HCT116 (cell line): ENCODE measurements at regions of chr2 and their contacts with region 1.

Region 1: GRCh38 chr2:189142893-189143759 is 36.4 kb downstream of the COL5A2 start:
- DNase-seq: peak; percentile 62
- ATAC-seq: peak; percentile 99
- H3K4me3 ChIP-seq: no peak overlapping the region
- H3K27ac ChIP-seq: no peak overlapping the region
- H3K4me1 ChIP-seq: no peaks in the 10 kb centered on the region
- H3K27me3 ChIP-seq: no peaks in the 10 kb centered on the region
- CTCF ChIP-seq: peak; percentile 96 to 99 (median 99)
- POLR2A ChIP-seq: no peak
- RAD21 ChIP-seq: peak; percentile 71

Region 2: GRCh38 chr2:188949046-188949818 is 193.9 kb before region 1 on chr2:
- CTCF ChIA-PET with region 1: no interaction called
- POLR2A ChIA-PET with region 1: no interaction called
- RAD21 ChIA-PET with region 1: no interaction called
- intact Hi-C with region 1: no loop called
- DNase-seq: no peak
- ATAC-seq: no peak
- H3K4me3 ChIP-seq: no peak overlapping the region
- H3K27ac ChIP-seq: no peak overlapping the region
- H3K4me1 ChIP-seq: no peaks in the 10 kb centered on the region
- H3K27me3 ChIP-seq: no peaks in the 10 kb centered on the region
- CTCF ChIP-seq: no peak
- POLR2A ChIP-seq: no peak
- RAD21 ChIP-seq: no peak

Region 3: DNA sequence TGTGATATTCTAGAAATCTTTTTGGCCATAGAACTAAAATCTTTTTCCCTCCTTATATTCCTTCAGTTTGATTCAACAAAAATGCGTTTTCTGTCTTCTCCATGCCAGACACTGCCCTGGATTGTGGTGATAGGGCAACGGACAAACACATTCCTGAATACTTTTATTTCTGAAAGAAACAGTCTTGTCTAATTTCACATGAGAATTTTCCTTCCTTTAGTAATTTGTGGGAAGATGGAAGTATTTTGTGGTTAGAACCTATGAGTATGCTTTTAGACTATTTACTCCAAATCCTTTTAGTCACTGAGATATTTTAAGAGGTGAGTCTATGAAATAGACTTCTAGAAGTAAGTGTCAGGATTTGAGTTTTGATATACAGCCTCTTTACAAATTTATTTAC is 13.2 kb before region 1 on chr2:
- CTCF ChIA-PET with region 1: interaction called, 27 read pairs
- POLR2A ChIA-PET with region 1: no interaction called
- RAD21 ChIA-PET with region 1: no interaction called
- intact Hi-C with region 1: no loop called
- DNase-seq: no peak
- ATAC-seq: no peak
- H3K4me3 ChIP-seq: no peak overlapping the region
- H3K27ac ChIP-seq: no peak overlapping the region
- H3K4me1 ChIP-seq: no peaks in the 10 kb centered on the region
- H3K27me3 ChIP-seq: no peaks in the 10 kb centered on the region
- CTCF ChIP-seq: no peak
- POLR2A ChIP-seq: no peak
- RAD21 ChIP-seq: no peak

Region 4: GRCh38 chr2:189164746-189165145 is 21.6 kb after region 1 on chr2:
- CTCF ChIA-PET with region 1: interaction called, 12 read pairs
- POLR2A ChIA-PET with region 1: no interaction called
- RAD21 ChIA-PET with region 1: no interaction called
- intact Hi-C with region 1: no loop called
- DNase-seq: no peak
- ATAC-seq: no peak
- H3K4me3 ChIP-seq: no peak overlapping the region
- H3K27ac ChIP-seq: no peak overlapping the region
- H3K4me1 ChIP-seq: no peaks in the 10 kb centered on the region
- H3K27me3 ChIP-seq: no peaks in the 10 kb centered on the region
- CTCF ChIP-seq: no peak
- POLR2A ChIP-seq: no peak
- RAD21 ChIP-seq: no peak

Region 5: DNA sequence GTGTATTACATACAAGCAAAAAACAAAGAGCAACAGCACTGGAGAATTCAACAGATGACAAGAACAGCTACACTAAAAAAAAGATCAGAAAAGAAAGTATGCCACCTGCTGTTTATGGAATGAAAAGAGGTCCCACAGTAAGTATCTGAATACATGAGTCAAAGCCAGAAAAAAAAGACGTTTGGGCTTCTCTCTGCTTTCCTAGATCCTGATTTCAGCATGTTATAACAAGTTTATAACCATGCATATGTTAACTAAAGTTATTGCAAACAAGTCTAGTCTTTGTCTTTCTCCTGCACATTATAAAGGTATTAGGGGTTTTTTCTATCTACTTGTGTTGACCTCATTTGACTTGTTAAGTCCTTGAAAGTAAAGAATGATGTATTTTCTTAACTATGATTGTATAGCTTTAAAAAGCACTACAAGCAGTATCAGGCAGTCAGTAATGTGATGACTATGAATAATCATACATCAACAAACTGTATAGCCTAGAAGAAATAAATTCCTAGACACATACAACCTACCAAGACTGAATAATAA is 144.9 kb after region 1 on chr2:
- CTCF ChIA-PET with region 1: interaction called, 18 read pairs
- POLR2A ChIA-PET with region 1: no interaction called
- RAD21 ChIA-PET with region 1: interaction called in 1 of 2 experiments, 5 read pairs
- intact Hi-C with region 1: loop called (anchors 1 kb)
- DNase-seq: peak; percentile 34
- ATAC-seq: peak; percentile 76
- H3K4me3 ChIP-seq: no peak overlapping the region
- H3K27ac ChIP-seq: no peak overlapping the region
- H3K4me1 ChIP-seq: no peaks in the 10 kb centered on the region
- H3K27me3 ChIP-seq: no peaks in the 10 kb centered on the region
- CTCF ChIP-seq: peak; percentile 38 to 89 (median 57); a peak in 5 of 6 replicates
- POLR2A ChIP-seq: no peak
- RAD21 ChIP-seq: peak; percentile 82